ENCODE measurements at regions of chr4 and their contacts with region 1.

Region 1: DNA sequence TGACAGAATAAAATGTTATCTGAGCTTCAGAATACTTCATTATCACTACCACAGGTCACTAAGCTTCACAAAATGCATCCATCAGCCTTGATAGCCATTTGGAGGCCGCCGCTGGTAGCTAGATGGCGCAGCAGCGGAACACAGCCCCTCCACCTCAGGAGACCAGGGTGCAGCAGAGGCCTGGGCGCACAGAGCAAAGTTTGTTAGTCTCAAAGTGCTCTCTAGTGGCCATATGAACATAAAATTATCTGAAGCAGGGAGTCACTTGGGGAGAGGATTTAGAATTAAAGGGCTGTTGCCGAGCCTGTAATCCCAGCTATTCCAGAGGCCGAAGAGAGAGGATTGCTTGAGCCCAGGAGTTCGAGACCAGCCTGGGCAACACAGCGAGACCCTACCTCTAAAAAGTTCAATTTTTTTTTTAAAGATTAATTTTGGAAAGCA is 8.1 kb upstream of the DCTD start:
- DNase-seq: peak; percentile 91
- H3K4me3 ChIP-seq: no peak overlapping the region
- H3K27ac ChIP-seq: no peak overlapping the region
- H3K4me1 ChIP-seq: no peaks in the 10 kb centered on the region
- H3K27me3 ChIP-seq: no peaks in the 10 kb centered on the region
- CTCF ChIP-seq: peak; percentile 92

Region 2: GRCh38 chr4:181143250-181143854 is 1782.0 kb before region 1 on chr4:
- CTCF ChIA-PET with region 1: no interaction called
- POLR2A ChIA-PET with region 1: no interaction called
- intact Hi-C with region 1: loop called (anchors 10 kb)
- DNase-seq: peak; percentile 79
- H3K4me3 ChIP-seq: no peak overlapping the region
- H3K27ac ChIP-seq: no peak overlapping the region
- H3K4me1 ChIP-seq: no peaks in the 10 kb centered on the region
- H3K27me3 ChIP-seq: peaks cover 24% of the 10 kb centered on the region
- CTCF ChIP-seq: peak; percentile 92

Region 3: GRCh38 chr4:181578911-181579310 is 1346.4 kb before region 1 on chr4:
- CTCF ChIA-PET with region 1: no interaction called
- POLR2A ChIA-PET with region 1: no interaction called
- intact Hi-C with region 1: loop called (anchors 10 kb)
- DNase-seq: no peak
- H3K4me3 ChIP-seq: no peak overlapping the region
- H3K27ac ChIP-seq: no peak overlapping the region
- H3K4me1 ChIP-seq: no peaks in the 10 kb centered on the region
- H3K27me3 ChIP-seq: peaks cover 28% of the 10 kb centered on the region
- CTCF ChIP-seq: no peak

Region 4: GRCh38 chr4:182478475-182478874 is 446.8 kb before region 1 on chr4:
- CTCF ChIA-PET with region 1: no interaction called
- POLR2A ChIA-PET with region 1: no interaction called
- intact Hi-C with region 1: loop called (anchors 5 kb)
- DNase-seq: peak; percentile 75
- H3K4me3 ChIP-seq: no peak overlapping the region
- H3K27ac ChIP-seq: no peak overlapping the region
- H3K4me1 ChIP-seq: no peaks in the 10 kb centered on the region
- H3K27me3 ChIP-seq: no peaks in the 10 kb centered on the region
- CTCF ChIP-seq: peak; percentile 74